Tibial artery (tissue), 4 donors: ENCODE measurements at regions of chr19 and their contacts with region 1.

Region 1: DNA sequence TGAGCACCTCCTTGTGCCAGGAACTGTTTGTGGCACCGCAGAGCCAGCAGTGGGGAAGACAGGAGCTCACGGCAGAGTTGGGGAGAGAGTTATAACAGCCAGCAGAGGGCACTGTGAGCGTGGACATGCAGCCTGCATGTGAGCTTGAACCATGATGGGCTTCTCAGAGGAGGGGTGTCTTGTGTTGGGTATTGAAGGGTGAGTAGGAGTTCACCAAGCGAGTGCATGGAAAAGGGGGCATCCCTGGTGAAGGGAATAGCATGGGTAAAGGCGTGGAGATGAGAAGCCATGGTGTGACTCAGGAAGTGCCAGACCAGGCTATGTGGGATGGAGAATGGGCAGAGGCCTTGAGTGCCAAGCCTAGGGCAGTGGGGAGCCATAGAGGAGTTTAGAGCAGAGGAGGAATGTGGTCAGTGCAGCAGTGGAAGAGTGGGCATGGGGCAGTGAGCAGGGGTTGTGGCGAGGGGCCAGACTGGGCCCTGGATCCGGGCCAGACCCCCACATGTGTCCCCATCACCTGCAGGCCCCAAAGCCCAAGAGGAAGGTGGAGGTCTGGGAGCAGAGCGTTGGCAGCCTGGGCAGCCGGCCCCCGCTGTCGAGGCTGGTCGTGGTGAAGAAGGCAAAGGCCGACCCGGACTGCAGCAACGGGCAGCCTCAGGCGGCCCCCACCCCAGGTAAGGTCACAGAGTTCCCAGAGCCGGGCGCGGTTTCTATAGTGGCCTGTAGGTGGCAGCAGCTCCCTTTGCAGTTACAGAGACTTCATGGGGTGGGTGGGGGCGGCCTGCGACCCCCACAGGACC is 11.8 kb upstream of the SHD start:
- DNase-seq: peak in 1 of 2 donors; percentile 34
- H3K4me3 ChIP-seq: no peak overlapping the region
- H3K27ac ChIP-seq: no peak overlapping the region
- H3K4me1 ChIP-seq: no peaks in the 10 kb centered on the region
- H3K27me3 ChIP-seq: no peaks in the 10 kb centered on the region
- CTCF ChIP-seq: peak; percentile 66 to 76

Region 2: DNA sequence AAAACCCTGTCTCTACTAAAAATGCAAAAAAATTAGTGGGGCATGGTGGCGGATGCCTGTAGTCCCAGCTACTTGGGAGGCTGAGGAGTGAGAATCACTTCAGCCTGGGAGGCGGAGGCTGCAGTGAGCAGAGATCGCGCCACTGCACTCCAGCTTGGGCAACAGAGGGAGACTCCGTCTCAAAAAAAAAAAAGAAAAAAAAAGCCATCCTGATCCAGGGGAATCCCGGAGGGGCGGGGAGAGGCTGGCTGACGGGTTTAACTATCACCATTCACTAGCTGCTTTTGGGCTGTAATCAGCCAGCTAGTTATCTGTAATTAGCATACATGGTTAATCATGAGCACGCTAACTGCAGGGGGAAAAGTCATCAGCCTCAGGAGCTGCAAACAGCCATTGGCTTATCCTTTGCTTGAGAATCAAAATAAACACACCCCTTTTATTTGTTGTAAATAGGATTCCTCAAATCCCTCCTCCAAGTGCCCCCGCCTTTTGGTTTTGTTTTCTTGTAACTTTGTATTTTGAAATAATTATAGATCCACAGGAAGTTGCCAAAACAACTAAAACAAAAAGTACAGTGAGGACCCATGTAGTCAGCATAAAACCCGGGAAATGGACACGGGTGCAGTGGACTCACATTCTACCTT is 46.7 kb after region 1 on chr19:
- intact Hi-C with region 1: no loop called
- DNase-seq: no peak
- H3K4me3 ChIP-seq: no peak overlapping the region
- H3K27ac ChIP-seq: no peak overlapping the region
- H3K4me1 ChIP-seq: no peaks in the 10 kb centered on the region
- H3K27me3 ChIP-seq: peaks cover 0 to 48% of the 10 kb centered on the region in 2 donors
- CTCF ChIP-seq: no peak

Region 3: GRCh38 chr19:4352701-4353121 is 85.4 kb after region 1 on chr19:
- intact Hi-C with region 1: loop called (anchors 2 kb)
- DNase-seq: peak in 1 of 2 donors; percentile 61
- H3K4me3 ChIP-seq: no peak overlapping the region
- H3K27ac ChIP-seq: no peak overlapping the region
- H3K4me1 ChIP-seq: no peaks in the 10 kb centered on the region
- H3K27me3 ChIP-seq: no peaks in the 10 kb centered on the region
- CTCF ChIP-seq: peak; percentile 51 to 89

Region 4: DNA sequence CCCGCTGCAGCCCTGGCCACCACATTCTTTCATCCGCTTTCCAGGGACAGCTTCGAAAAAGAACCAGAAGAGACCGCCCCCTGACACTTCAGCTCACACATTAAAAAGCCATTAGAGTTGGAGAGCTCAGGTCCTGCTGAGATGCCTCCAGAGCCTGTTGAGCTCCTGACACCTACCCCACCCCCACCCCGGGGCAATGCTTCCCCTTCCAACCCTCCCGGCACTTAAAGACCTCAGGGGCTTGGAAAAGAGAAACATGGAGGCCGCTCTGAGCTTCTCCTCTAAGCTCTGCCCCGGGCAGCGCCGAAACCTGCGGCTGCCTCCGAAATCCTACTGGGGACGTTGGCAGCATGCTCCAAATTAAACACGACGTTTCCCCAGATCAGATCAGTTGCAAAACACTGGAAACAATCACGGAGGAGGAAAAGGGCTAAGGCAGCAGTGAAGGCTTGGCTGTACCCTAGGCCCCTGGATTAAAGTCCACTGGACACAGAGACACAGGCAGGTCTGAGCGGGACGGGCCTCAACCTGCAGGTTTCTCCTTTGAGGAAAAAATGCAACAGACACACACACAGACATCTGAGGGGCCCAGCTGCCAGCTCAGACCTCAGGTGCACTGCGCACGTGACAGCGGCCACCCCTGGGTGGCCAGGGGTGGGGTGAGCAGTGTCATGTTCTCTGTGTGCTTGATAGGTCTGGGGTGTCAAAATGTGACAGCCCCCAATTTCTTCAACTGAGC is 123.4 kb after region 1 on chr19:
- intact Hi-C with region 1: no loop called
- DNase-seq: peak in 1 of 2 donors; percentile 65
- H3K4me3 ChIP-seq: peak overlapping the region in 1 of 2 donors; percentile 3
- H3K27ac ChIP-seq: peak overlapping the region; percentile 45 to 52
- H3K4me1 ChIP-seq: peaks cover 0 to 75% (median 58%) of the 10 kb centered on the region in 4 donors
- H3K27me3 ChIP-seq: no peaks in the 10 kb centered on the region
- CTCF ChIP-seq: no peak

Region 5: DNA sequence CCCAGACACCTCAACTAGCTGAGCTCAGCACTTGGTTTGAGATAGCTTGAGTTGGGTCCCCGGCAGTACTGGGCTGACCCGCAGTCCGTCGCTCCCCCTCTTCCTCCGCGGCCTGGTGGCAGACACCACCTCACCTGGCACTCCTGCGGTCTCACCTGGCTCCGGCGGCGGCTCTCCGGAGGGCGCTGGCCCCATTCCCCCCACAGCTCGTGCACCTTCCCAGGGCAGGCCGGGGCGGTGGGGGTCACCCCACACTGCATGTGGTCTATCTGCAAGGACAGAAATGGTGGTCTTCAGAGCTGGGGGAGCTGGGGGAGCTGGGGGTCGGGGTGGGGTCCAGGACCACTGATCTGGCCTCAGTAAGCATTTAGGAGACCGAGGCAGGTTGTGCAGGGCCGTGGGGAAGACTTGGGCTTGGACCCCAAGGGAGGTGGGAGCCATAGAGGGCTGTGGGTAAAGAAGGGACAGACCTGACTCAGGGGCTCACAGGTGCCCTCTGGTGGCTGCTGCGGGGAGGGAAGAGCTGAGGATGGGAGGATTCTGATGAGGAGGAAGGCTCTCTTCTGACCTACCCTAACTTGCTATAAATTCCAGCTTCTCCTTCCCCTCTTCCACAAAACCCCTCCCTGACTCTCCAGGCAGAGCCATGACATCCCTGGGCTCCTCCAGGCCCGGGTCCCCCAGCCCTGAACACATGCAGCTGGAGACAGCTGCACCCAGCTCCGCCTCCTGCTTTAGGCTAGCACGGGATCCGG is 257.7 kb after region 1 on chr19:
- intact Hi-C with region 1: loop called (anchors 5 kb)
- DNase-seq: peak in 1 of 2 donors; percentile 45
- H3K4me3 ChIP-seq: no peak overlapping the region
- H3K27ac ChIP-seq: no peak overlapping the region
- H3K4me1 ChIP-seq: no peaks in the 10 kb centered on the region
- H3K27me3 ChIP-seq: peaks cover 0 to 38% of the 10 kb centered on the region in 2 donors
- CTCF ChIP-seq: peak; percentile 48 to 70

Region 6: DNA sequence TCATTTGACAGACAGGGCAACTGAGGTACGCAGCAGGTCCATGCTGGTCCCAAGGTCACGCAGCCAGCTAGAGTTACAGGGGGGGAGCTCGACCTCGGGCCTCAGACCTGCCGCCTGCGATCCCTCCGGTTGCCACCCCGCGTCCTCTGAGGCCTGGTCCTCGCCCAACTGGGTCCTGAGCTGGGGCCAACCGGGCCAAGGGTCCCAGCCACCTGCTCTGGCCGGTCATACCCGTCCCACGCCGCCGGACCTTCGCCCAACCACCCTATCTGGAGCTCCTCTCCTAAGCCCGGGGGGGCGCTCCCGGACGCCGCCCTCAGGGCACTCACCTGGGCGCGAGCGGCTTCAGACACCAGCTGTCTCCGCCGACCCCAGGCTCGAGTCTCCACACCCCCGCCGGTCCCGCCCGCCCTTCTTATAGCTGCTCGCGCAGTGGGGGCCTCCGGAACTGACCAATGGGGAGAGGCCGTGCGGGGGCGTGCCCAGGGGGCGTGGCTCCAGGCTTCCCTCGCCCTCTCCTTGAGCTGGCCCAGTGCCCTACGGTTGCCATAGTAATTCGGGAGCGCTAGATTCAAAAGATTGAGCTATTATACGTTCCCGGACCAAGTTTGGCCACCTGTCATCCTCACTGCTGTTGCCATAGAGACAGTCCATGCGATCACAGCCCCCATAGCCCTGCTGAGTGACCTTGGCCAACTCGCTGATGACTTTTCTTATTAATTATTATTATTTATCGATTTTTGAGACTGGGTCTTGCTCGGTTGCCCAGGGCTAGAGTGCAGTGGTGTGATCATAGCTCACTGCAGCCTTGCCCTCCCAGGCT is 267.7 kb after region 1 on chr19 and contains the start of gene PLIN5:
- intact Hi-C with region 1: no loop called
- DNase-seq: peak in 1 of 2 donors; percentile 32
- H3K4me3 ChIP-seq: no peak within 1 kb of the TSS
- H3K27ac ChIP-seq: no peak within 1 kb of the TSS
- H3K4me1 ChIP-seq: peaks cover 0 to 10% (median 6%) of the 10 kb centered on the region in 4 donors
- H3K27me3 ChIP-seq: peaks cover 0 to 75% of the 10 kb centered on the region in 2 donors
- CTCF ChIP-seq: no peak